Uterus (tissue), 4 donors: ENCODE measurements at regions of chr9 and their contacts with region 1.

Region 1: DNA sequence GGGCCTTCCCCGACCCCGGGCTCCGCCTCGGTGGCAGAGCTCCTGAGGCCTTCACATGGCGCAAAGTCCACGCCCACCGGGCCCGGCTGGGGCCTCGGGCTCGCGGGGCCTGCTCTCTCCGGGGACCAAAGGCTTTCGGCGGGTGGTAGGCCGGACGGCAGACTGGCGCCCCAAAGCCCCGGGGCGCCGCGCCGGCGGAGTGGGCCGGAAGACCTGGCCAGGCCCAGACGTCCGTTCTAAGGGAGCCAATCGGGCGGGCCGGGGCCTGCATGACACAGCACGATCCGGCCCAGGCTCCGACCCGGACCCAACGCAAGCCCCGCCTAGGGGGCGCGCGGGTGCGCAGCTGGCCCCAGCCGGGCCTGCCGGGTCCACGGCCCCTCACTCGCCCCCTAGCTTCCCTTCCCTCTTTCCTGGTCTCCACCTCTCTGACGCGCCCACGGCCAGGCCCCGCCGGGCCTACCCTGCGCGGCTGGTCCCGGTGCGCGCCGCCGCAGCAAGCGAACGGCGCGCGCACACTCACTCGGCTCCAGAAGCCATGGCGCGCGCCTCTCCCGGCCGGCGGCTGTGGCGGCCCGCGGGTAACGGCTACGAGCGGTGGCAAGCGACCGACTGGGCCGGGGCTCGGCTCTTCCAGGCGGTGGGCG is 488 bp downstream of the VCP start:
- DNase-seq: peak; percentile 79 to 80
- H3K4me3 ChIP-seq: peak overlapping the region; percentile 54 to 99
- H3K27ac ChIP-seq: peak overlapping the region; percentile 98 to 100
- H3K4me1 ChIP-seq: peaks cover 17 to 20% of the 10 kb centered on the region in 2 donors
- H3K27me3 ChIP-seq: no peaks in the 10 kb centered on the region
- CTCF ChIP-seq: peak in 3 of 4 experiments; percentile 34 to 47 (median 35)
- POLR2A ChIP-seq: no peak

Region 2: DNA sequence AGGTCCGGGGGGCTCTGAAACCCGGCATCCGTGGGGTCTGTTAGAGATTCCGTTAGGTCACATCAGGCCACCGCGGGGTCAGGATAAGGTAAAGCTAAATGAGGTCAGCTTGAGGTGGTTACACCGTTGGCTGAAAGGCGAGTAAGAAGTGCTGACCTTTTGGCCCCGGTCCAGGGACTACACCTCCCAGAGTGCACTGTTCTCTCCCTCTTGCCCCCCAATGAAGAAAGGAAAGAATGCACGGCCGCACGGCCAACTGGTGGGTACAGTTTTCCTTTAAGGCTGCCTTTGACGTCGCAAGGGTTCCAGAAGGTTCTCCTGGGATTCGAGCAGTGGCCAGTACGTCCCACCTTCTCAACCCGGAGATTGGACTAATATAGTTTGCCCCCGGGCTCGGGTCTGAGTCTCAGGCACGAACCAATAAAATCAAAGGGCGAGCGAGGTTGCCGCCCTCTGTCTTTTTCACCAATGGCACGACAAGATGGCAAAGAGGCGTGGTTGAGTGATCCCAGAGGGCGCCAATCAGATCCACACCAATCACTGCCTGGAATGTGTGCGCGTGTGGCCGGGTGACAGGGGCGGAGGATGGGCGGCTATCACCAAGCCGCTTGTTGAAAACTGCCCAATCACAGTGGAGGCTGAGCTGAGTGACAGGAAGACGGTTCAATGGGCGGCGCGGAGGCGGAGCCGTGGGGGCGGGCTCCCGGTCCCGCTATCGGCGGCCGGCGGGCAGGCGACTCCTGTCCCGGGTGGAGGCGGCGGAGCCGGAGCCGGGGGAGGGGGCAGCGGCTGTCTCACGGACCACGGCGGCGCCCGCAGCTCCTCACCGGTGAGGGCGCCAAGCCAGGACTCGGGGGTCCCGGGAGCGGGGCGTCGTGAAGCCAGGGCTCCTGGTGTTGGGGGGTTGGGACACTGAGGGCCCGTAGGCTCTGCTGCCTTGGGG is 82.7 kb before region 1 on chr9 and contains the start of gene DNAJB5:
- intact Hi-C with region 1: loop called (anchors 10 kb)
- DNase-seq: peak; percentile 99
- H3K4me3 ChIP-seq: peak within 1 kb of the TSS; percentile 84 to 99
- H3K27ac ChIP-seq: peak within 1 kb of the TSS; percentile 90 to 100
- H3K4me1 ChIP-seq: peaks cover 6 to 24% of the 10 kb centered on the region in 2 donors
- H3K27me3 ChIP-seq: no peaks in the 10 kb centered on the region
- CTCF ChIP-seq: peak in 2 of 4 experiments; percentile 7 to 27
- POLR2A ChIP-seq: peak; percentile 85 to 92
- total RNA-seq, gene DNAJB5: 9.7 to 45.0 (median 25.1) TPM

Region 3: DNA sequence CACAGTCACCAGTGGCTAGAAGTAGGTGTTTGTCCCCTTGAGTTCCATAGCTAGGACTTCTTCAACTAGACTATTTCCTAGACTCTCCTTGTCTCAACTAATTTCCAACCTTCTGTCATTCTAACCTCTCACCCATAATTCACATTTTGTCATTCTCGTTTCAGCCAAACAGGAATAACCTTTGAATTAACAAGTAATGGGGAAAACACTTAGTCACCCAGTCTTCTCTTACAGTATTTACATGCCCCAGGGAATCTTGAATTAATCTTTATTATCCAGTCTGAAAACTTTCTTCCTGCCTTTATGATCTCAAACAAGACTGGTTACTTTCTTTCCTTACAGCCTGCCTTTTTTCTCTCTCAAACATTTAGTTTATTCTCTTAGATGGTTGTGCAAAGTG is 354.7 kb after region 1 on chr9:
- intact Hi-C with region 1: no loop called
- DNase-seq: no peak
- H3K4me3 ChIP-seq: no peak overlapping the region
- H3K27ac ChIP-seq: no peak overlapping the region
- H3K4me1 ChIP-seq: no peaks in the 10 kb centered on the region
- H3K27me3 ChIP-seq: no peaks in the 10 kb centered on the region
- CTCF ChIP-seq: no peak
- POLR2A ChIP-seq: no peak